Ovary (tissue), 10 donors: ENCODE measurements at regions of chr18 and their contacts with region 1.

Region 1: GRCh38 chr18:12883684-12884405 is at the start of gene PTPN2:
- DNase-seq: peak; percentile 94 to 96 (median 95)
- H3K4me3 ChIP-seq: peak within 1 kb of the TSS; percentile 83
- H3K27ac ChIP-seq: peak within 1 kb of the TSS; percentile 83 to 98
- H3K4me1 ChIP-seq: peaks cover 10% of the 10 kb centered on the region
- H3K27me3 ChIP-seq: no peaks in the 10 kb centered on the region
- CTCF ChIP-seq: no peak
- EP300 ChIP-seq: peak; percentile 56
- POLR2A ChIP-seq: peak; percentile 91
- total RNA-seq, gene PTPN2: 29.4 to 47.3 (median 36.0) TPM

Region 2: DNA sequence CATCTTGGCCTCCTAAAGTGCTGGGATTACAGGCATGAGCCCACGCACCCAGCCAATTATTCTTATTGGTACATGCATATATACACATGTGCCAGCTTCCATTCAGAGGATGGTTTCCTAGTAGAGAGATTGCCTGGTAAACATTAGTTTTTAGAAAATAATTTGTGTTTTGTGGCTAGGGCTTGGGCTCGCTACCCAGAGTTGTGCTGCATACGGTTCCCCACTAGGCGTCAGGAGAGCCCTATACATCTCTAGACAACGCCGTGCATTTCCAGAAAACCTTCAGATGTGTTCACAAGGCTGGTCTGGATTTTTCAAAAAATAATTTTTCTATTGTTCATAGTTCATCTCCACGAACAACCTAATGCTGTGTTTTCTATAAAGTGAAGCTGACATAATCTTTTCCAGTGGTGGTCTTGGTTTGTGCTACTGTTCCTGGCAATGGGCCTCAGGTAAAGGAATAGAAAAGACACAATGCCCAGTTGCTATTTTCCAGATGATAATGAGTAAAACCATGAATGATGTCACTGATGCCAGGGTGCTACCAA is 492.2 kb before region 1 on chr18:
- intact Hi-C with region 1: loop called in 1 of 4 experiments (anchors 10 kb)
- DNase-seq: peak; percentile 50 to 74 (median 70)
- H3K4me3 ChIP-seq: no peak overlapping the region
- H3K27ac ChIP-seq: no peak overlapping the region
- H3K4me1 ChIP-seq: no peaks in the 10 kb centered on the region
- H3K27me3 ChIP-seq: no peaks in the 10 kb centered on the region
- CTCF ChIP-seq: peak; percentile 71 to 86 (median 86)
- EP300 ChIP-seq: no peak
- POLR2A ChIP-seq: no peak

Region 3: DNA sequence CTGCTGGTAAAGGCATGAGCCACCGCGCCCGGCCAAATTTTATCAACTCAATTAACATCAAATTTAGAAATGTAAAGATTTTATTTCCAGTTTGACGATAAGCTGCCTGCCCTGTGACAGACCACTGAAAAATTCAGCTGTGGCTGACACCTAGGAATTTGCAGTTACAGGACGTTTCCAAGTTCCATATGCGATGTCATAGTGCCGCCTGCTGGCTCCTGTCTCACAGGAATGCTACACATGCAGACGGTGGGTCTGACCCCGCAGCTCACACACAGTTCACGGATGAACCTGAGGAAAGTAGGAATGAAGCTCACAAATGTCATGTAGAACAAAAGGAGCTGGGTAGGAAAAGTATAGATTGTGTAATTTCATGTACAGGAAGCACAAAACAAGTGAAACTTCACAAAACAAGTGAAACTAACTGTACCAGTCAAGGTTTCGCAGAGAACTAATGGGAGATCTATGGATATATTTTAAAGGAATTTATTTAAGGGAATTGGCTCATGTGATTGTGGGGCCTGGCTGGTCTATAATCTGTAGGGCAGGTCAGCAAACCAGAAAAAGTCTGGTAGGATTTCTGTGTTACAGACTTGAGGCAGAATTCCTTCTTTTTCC is 50.7 kb after region 1 on chr18:
- intact Hi-C with region 1: loop called in 1 of 4 experiments (anchors 5 kb)
- DNase-seq: peak; percentile 76 to 90 (median 89)
- H3K4me3 ChIP-seq: no peak overlapping the region
- H3K27ac ChIP-seq: no peak overlapping the region
- H3K4me1 ChIP-seq: peaks cover 1% of the 10 kb centered on the region
- H3K27me3 ChIP-seq: no peaks in the 10 kb centered on the region
- CTCF ChIP-seq: peak; percentile 65 to 96 (median 92)
- EP300 ChIP-seq: no peak
- POLR2A ChIP-seq: no peak

Region 4: DNA sequence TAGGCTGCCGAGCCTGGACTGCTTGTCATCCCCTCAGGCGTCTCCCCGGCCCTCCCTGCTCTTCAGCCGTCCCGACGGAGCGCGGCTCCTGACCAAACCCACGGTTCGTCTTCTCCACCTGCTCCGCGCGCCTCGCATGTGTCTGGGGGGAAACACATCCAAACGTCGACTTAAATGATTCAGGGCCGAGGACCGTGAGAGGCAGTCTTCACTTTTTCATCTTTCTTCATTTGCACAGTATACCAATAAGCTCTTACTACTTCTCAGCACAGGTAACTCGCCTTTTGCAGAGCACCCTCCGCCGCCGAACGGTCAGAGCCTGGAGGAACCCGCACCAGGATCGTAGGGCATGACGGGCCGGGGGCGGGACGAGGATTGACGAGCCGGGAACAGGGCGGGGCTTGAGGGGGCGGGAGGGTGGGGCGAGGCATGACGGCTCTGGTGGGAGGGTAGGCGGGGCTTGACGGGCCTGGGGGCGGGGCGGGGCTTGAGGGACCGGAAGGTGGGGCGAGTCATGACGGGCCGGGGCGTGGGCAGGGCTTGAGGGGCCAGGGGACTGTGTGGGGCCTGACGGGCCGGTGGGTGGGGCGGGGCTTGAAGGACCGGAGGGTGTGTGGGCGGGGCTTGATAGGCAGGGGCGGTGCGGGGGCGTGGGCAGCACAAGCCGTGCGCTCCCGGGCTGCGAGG is 63.7 kb after region 1 on chr18 and contains the start of gene SEH1L:
- intact Hi-C with region 1: loop called in 1 of 4 experiments (anchors 1 kb)
- DNase-seq: peak; percentile 98 to 100 (median 99)
- H3K4me3 ChIP-seq: peak within 1 kb of the TSS; percentile 79
- H3K27ac ChIP-seq: peak within 1 kb of the TSS; percentile 92 to 99
- H3K4me1 ChIP-seq: peaks cover 3% of the 10 kb centered on the region
- H3K27me3 ChIP-seq: no peaks in the 10 kb centered on the region
- CTCF ChIP-seq: no peak
- EP300 ChIP-seq: no peak
- POLR2A ChIP-seq: peak; percentile 54
- total RNA-seq, gene SEH1L: 17.3 to 56.1 (median 37.9) TPM

Region 5: DNA sequence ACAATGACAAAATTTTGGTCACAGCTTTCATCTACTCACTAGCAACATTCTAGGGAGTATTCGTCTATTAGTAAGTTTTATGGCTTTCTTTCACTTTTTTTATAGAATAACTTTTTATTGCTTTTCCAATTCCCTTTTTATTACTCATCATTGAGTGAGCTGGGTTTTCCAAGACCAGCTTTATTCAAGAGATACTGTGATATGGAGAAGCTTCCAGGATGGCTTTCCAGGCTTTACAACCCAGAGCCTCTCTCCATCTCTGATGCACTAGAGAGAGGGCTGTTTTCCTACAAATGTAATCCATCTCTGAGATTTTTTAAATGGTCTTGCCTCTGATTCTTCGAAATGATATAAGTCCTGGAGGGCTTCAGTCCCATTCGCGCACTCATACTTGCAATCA is 453.0 kb after region 1 on chr18:
- intact Hi-C with region 1: no loop called
- DNase-seq: no peak
- H3K4me3 ChIP-seq: no peak overlapping the region
- H3K27ac ChIP-seq: no peak overlapping the region
- H3K4me1 ChIP-seq: no peaks in the 10 kb centered on the region
- H3K27me3 ChIP-seq: no peaks in the 10 kb centered on the region
- CTCF ChIP-seq: no peak
- EP300 ChIP-seq: no peak
- POLR2A ChIP-seq: no peak